ENCODE measurements at regions of chr11 and their contacts with region 1.

Region 1: GRCh38 chr11:128172046-128172878 is 415.1 kb downstream of the ETS1 start:
- DNase-seq: peak; percentile 72
- H3K4me3 ChIP-seq: no peak overlapping the region
- H3K27ac ChIP-seq: no peak overlapping the region
- H3K27me3 ChIP-seq: no peaks in the 10 kb centered on the region
- CTCF ChIP-seq: peak; percentile 83

Region 2: GRCh38 chr11:128061281-128061871 is 110.9 kb before region 1 on chr11:
- CTCF ChIA-PET with region 1: no interaction called
- POLR2A ChIA-PET with region 1: no interaction called
- DNase-seq: no peak
- H3K4me3 ChIP-seq: no peak overlapping the region
- H3K27ac ChIP-seq: no peak overlapping the region
- H3K27me3 ChIP-seq: no peaks in the 10 kb centered on the region
- CTCF ChIP-seq: no peak

Region 3: GRCh38 chr11:128279866-128280265 is 107.6 kb after region 1 on chr11:
- CTCF ChIA-PET with region 1: interaction called, 47 read pairs
- POLR2A ChIA-PET with region 1: no interaction called
- DNase-seq: no peak
- H3K4me3 ChIP-seq: no peak overlapping the region
- H3K27ac ChIP-seq: no peak overlapping the region
- H3K27me3 ChIP-seq: no peaks in the 10 kb centered on the region
- CTCF ChIP-seq: no peak

Region 4: GRCh38 chr11:128544471-128545051 is 372.3 kb after region 1 on chr11:
- CTCF ChIA-PET with region 1: interaction called, 14 read pairs
- POLR2A ChIA-PET with region 1: no interaction called
- DNase-seq: peak; percentile 55
- H3K4me3 ChIP-seq: peak overlapping the region; percentile 23; the same call in 1 of the 2 replicates
- H3K27ac ChIP-seq: peak overlapping the region; percentile 43
- H3K27me3 ChIP-seq: no peaks in the 10 kb centered on the region
- CTCF ChIP-seq: no peak

Region 5: DNA sequence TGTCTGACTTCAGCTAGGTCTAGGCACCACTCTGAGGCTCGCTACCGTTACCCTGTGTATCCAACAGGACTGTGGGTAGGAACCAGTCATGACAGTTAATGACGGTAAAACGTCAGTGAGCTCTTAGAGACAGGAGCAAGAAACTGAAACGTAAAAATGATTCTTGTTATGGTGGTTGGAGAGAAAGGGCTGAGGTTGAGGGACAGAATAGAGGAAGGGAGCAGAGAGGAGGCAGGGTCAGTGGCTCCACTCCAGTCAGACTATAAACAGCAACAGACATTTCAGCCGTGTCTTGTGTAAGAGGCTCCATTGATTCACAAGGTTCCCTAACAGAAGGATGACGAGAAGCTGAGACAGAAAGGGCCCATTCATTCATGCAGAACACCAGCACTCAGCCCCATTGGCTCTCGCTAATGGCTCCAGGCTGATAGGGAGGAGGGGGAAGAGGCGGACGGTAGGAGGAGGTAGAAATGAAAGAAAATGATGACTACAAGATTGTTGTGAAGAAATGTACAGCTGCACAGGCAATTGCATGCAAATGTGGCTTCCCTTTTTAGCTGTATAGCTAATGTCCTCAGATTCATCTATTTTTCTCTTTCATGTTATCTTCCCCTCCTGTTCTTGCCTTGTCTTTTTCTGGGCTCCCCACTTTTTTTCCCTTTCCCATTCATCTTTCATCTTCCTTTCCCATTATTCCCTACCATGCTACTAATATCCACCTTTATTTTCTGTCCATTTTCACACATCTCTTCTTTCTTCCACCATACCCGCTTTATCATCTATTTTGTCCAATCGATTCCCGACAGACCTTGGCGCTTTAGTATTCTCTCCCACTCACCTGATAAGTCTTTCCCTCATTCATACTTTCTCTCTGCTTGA is 380.8 kb after region 1 on chr11:
- CTCF ChIA-PET with region 1: interaction called, 14 read pairs
- POLR2A ChIA-PET with region 1: no interaction called
- DNase-seq: no peak
- H3K4me3 ChIP-seq: no peak overlapping the region
- H3K27ac ChIP-seq: no peak overlapping the region
- H3K27me3 ChIP-seq: no peaks in the 10 kb centered on the region
- CTCF ChIP-seq: no peak

Region 6: GRCh38 chr11:128624269-128625175 is 452.3 kb after region 1 on chr11:
- CTCF ChIA-PET with region 1: interaction called, 295 read pairs
- POLR2A ChIA-PET with region 1: no interaction called
- DNase-seq: no peak
- H3K4me3 ChIP-seq: no peak overlapping the region
- H3K27ac ChIP-seq: no peak overlapping the region
- H3K27me3 ChIP-seq: no peaks in the 10 kb centered on the region
- CTCF ChIP-seq: no peak

Region 7: GRCh38 chr11:128868841-128869580 is 696.7 kb after region 1 on chr11:
- CTCF ChIA-PET with region 1: no interaction called
- POLR2A ChIA-PET with region 1: no interaction called
- DNase-seq: no peak
- H3K4me3 ChIP-seq: no peak overlapping the region
- H3K27ac ChIP-seq: no peak overlapping the region
- H3K27me3 ChIP-seq: peaks cover 17% of the 10 kb centered on the region
- CTCF ChIP-seq: no peak

Region 8: GRCh38 chr11:128917144-128917724 is 745.0 kb after region 1 on chr11:
- CTCF ChIA-PET with region 1: interaction called, 12 read pairs
- POLR2A ChIA-PET with region 1: no interaction called
- DNase-seq: no peak
- H3K4me3 ChIP-seq: no peak overlapping the region
- H3K27ac ChIP-seq: no peak overlapping the region
- H3K27me3 ChIP-seq: peaks cover 50% of the 10 kb centered on the region
- CTCF ChIP-seq: no peak

Measured in AG04450 (cell line).